ENCODE measurements at regions of chr6 and their contacts with region 1.

Region 1: GRCh38 chr6:37516076-37516919 is 16.6 kb upstream of the CCDC167 start:
- DNase-seq: peak; percentile 98
- H3K4me3 Mint-ChIP-seq: peak overlapping the region; percentile 72
- H3K27ac Mint-ChIP-seq: peak overlapping the region; percentile 97
- H3K4me1 Mint-ChIP-seq: peaks cover 82% of the 10 kb centered on the region
- H3K27me3 Mint-ChIP-seq: no peaks in the 10 kb centered on the region

Region 2: GRCh38 chr6:37239950-37240713 is 276.2 kb before region 1 on chr6:
- CTCF ChIA-PET with region 1: no interaction called
- intact Hi-C with region 1: loop called (anchors 1 kb)
- DNase-seq: peak; percentile 93
- H3K4me3 Mint-ChIP-seq: no peak overlapping the region
- H3K27ac Mint-ChIP-seq: peak overlapping the region; percentile 83
- H3K4me1 Mint-ChIP-seq: peaks cover 39% of the 10 kb centered on the region
- H3K27me3 Mint-ChIP-seq: no peaks in the 10 kb centered on the region

Region 3: GRCh38 chr6:37489660-37490361 is 26.5 kb before region 1 on chr6:
- CTCF ChIA-PET with region 1: interaction called, 8 read pairs
- intact Hi-C with region 1: loop called (anchors 1 kb)
- DNase-seq: peak; percentile 40
- H3K4me3 Mint-ChIP-seq: no peak overlapping the region
- H3K27ac Mint-ChIP-seq: no peak overlapping the region
- H3K4me1 Mint-ChIP-seq: peaks cover 68% of the 10 kb centered on the region
- H3K27me3 Mint-ChIP-seq: no peaks in the 10 kb centered on the region

Region 4: GRCh38 chr6:37499433-37500293 is 16.6 kb before region 1 on chr6 and contains the start of gene CCDC167:
- CTCF ChIA-PET with region 1: interaction called, 18 read pairs
- intact Hi-C with region 1: loop called (anchors 1 kb)
- DNase-seq: peak; percentile 99
- H3K4me3 Mint-ChIP-seq: peak within 1 kb of the TSS; percentile 98
- H3K27ac Mint-ChIP-seq: peak within 1 kb of the TSS; percentile 97
- H3K4me1 Mint-ChIP-seq: peaks cover 90% of the 10 kb centered on the region
- H3K27me3 Mint-ChIP-seq: no peaks in the 10 kb centered on the region
- total RNA-seq, gene CCDC167: 53.4 to 57.1 TPM

Region 5: GRCh38 chr6:37741757-37742400 is 225.6 kb after region 1 on chr6:
- CTCF ChIA-PET with region 1: no interaction called
- intact Hi-C with region 1: no loop called
- DNase-seq: peak; percentile 44
- H3K4me3 Mint-ChIP-seq: no peak overlapping the region
- H3K27ac Mint-ChIP-seq: no peak overlapping the region
- H3K4me1 Mint-ChIP-seq: no peaks in the 10 kb centered on the region
- H3K27me3 Mint-ChIP-seq: peaks cover 9% of the 10 kb centered on the region

Region 6: GRCh38 chr6:37819177-37819823 is 303.0 kb after region 1 on chr6 and contains the start of gene ZFAND3:
- CTCF ChIA-PET with region 1: no interaction called
- intact Hi-C with region 1: loop called (anchors 10 kb)
- DNase-seq: peak; percentile 95
- H3K4me3 Mint-ChIP-seq: peak within 1 kb of the TSS; percentile 92
- H3K27ac Mint-ChIP-seq: peak within 1 kb of the TSS; percentile 98
- H3K4me1 Mint-ChIP-seq: peaks cover 52% of the 10 kb centered on the region
- H3K27me3 Mint-ChIP-seq: no peaks in the 10 kb centered on the region
- total RNA-seq, gene ZFAND3: 33.6 to 35.3 TPM